Right ventricle myocardium inferior (tissue), 1 donor: ENCODE measurements at regions of chr7 and their contacts with region 1.

Region 1: DNA sequence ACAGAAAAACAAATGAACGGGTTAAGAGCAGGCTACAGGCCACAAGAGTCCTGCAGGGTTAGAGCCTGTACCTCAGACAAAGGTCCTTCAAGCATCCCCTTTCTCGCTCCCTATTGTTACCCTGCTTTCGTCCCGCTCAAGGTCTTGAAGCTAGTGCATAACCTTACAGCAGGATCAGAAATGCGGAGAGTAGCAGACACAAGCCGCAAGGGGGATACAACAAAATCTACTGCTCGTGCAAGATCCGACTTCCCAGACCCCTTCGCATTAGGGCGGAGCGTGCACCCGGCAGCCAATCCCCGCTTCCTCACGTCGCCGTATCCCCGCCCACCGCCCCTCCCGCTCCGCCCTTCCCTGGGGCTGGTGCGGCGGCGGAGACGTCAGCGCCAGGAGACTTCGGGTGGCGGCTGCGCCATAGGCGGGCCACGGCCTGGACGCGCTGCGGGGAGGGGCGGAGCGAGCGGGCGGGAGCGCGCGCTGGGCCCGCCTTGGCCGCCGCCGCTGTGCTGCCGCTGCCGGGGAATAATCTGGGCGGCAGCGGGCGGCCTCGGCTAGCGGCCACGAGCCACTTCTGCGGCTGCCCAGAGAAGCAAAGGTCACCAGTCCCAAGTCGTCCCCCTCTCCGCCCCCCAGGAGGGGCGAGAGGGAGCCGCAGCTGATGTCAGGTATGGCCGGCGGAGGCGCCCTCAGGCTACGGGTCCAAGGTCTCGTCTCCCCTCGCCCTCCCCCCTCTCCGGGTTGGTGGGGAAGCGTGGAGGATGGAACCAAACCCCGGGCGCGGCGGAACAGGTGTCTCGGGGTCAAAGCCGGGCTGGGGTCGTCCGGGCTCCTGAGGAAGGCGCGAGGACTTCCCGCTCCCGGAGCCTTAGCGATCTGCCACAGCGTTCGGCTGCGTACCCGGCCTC is at the start of gene C1GALT1:
- DNase-seq: peak; percentile 99
- ATAC-seq: peak; percentile 99
- total RNA-seq, gene C1GALT1: 19.6 TPM

Region 2: DNA sequence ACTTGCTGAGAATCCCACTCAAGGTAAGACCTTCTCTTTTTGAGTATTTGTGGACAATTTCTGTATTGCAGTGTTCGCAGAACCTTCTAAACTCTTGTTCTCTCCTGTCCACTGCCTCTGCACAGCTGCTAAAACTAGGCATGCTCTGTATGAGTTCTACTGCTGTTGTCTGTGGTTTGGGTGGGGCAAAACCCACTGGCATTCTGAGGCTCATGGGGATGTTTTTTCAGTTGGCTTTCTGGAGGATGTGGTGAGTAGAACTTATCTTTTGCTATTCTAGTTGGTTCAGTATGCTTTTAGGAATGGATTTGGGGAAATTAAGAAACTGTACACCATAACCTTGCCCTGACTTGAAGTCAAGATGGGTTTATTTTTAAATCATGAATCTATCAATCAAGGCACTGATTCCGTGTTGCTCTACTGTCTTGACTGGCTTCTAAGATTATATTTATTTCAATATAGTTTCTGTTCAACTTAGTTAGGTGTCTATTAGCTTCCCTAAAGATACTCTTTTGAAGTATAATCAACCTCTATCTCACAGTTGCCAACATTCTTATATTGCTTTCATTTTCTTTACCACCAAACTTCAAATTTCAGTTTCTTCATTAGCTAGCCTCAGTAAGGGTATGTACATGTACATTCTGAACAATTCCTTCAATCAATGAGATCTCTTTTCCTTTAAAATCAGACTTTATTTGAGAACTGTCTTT is 25.1 kb before region 1 on chr7:
- intact Hi-C with region 1: no loop called
- DNase-seq: no peak
- ATAC-seq: peak; percentile 37

Region 3: GRCh38 chr7:7257899-7258692 is 75.7 kb after region 1 on chr7:
- intact Hi-C with region 1: loop called (anchors 5 kb)
- DNase-seq: no peak
- ATAC-seq: no peak